CD4-positive, alpha-beta memory T cell (primary cell): ENCODE measurements at regions of chr3 and their contacts with region 1.

Region 1: GRCh38 chr3:51995346-51996163 is at the start of gene RPL29:
- DNase-seq: peak; percentile 91 to 94 (median 94)
- H3K4me3 ChIP-seq: peak within 1 kb of the TSS; percentile 94 to 95
- H3K4me3 Mint-ChIP-seq: peak within 1 kb of the TSS; percentile 99 to 100 (median 100)
- H3K27ac ChIP-seq: peak within 1 kb of the TSS; percentile 91
- H3K27ac Mint-ChIP-seq: peak within 1 kb of the TSS; percentile 99 to 100 (median 100)
- H3K4me1 ChIP-seq: peaks cover 30% of the 10 kb centered on the region
- H3K4me1 Mint-ChIP-seq: peaks cover 16 to 45% (median 29%) of the 10 kb centered on the region in 4 donors
- H3K27me3 ChIP-seq: no peaks in the 10 kb centered on the region
- H3K27me3 Mint-ChIP-seq: no peaks in the 10 kb centered on the region
- total RNA-seq, gene RPL29: 1,263 to 1,270 TPM

Region 2: GRCh38 chr3:51670823-51671733 is 324.5 kb before region 1 on chr3 and contains the start of gene TEX264:
- CTCF ChIA-PET with region 1: no interaction called
- POLR2A ChIA-PET with region 1: no interaction called
- intact Hi-C with region 1: no loop called
- DNase-seq: peak; percentile 95 to 97 (median 96)
- H3K4me3 ChIP-seq: peak within 1 kb of the TSS; percentile 88 to 89
- H3K4me3 Mint-ChIP-seq: peak within 1 kb of the TSS; percentile 88 to 95 (median 92)
- H3K27ac ChIP-seq: peak within 1 kb of the TSS; percentile 83
- H3K27ac Mint-ChIP-seq: peak within 1 kb of the TSS; percentile 95 to 97 (median 97)
- H3K4me1 ChIP-seq: peaks cover 66% of the 10 kb centered on the region
- H3K4me1 Mint-ChIP-seq: peaks cover 54 to 74% (median 63%) of the 10 kb centered on the region in 4 donors
- H3K27me3 ChIP-seq: no peaks in the 10 kb centered on the region
- H3K27me3 Mint-ChIP-seq: no peaks in the 10 kb centered on the region
- total RNA-seq, gene TEX264: 40.0 to 40.9 TPM

Region 3: GRCh38 chr3:51967384-51968169 is 28.0 kb before region 1 on chr3 and contains the start of gene PCBP4:
- CTCF ChIA-PET with region 1: interaction called, 22 read pairs
- POLR2A ChIA-PET with region 1: interaction called, 53 read pairs
- intact Hi-C with region 1: no loop called
- DNase-seq: peak in 3 of 5 donors; percentile 32 to 48 (median 43)
- H3K4me3 ChIP-seq: peak within 1 kb of the TSS; percentile 63 to 65
- H3K4me3 Mint-ChIP-seq: peak within 1 kb of the TSS; percentile 81 to 94 (median 83)
- H3K27ac ChIP-seq: peak within 1 kb of the TSS; percentile 57
- H3K27ac Mint-ChIP-seq: peak within 1 kb of the TSS; percentile 68 to 94 (median 85)
- H3K4me1 ChIP-seq: peaks cover 22% of the 10 kb centered on the region
- H3K4me1 Mint-ChIP-seq: peaks cover 15 to 40% (median 29%) of the 10 kb centered on the region in 4 donors
- H3K27me3 ChIP-seq: no peaks in the 10 kb centered on the region
- H3K27me3 Mint-ChIP-seq: no peaks in the 10 kb centered on the region
- total RNA-seq, gene PCBP4: 18.7 to 20.5 TPM

Region 4: DNA sequence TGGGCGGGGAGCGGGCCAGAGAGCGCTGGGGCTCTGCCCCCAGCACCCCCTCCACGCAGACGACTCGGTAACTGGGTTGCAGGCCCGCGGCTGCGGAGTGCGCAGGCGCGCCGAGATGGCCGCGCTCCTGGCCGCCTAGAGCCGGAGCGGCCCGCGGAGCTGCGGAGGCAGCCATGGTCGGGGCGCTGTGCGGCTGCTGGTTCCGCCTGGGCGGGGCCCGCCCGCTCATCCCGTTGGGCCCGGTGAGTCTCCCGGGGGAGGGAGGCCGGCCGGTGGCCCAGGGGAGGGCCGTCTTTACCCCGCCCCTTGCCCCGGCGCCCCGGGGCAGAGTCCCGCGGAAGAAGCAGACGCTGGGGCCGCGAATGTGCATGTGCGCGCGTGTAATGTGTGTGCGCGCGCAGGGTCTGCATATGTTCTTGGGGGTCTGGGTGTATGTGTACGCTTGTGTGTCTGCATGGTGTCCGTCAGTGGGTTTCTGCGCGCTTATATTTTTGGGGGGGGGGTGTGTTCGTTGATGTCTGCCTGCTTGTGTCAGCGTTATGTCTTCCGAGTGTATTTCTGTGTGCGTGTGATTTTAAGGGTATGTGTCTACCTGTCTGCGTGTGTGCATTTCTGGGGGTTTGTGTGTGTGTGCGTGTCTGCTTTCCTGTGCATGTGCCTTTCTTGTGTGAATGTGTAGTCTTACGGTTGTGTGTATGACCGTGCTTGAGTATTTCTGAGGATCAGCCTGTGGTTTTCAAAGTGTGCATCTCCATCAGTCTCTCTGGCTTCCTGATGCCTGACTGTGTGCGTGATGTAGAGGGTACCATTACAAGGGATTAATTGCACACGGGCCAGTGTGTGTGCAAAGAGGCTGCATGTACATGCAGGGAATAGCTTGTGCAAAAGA is 20.3 kb before region 1 on chr3 and contains the start of gene ABHD14A:
- CTCF ChIA-PET with region 1: interaction called, 22 read pairs
- POLR2A ChIA-PET with region 1: interaction called, 59 read pairs
- intact Hi-C with region 1: loop called (anchors 1 kb)
- DNase-seq: peak; percentile 75 to 80 (median 76)
- H3K4me3 ChIP-seq: peak within 1 kb of the TSS; percentile 81 to 95
- H3K4me3 Mint-ChIP-seq: peak within 1 kb of the TSS; percentile 90 to 99 (median 96)
- H3K27ac ChIP-seq: peak within 1 kb of the TSS; percentile 78
- H3K27ac Mint-ChIP-seq: peak within 1 kb of the TSS; percentile 68 to 98 (median 96)
- H3K4me1 ChIP-seq: peaks cover 32% of the 10 kb centered on the region
- H3K4me1 Mint-ChIP-seq: peaks cover 28 to 53% (median 41%) of the 10 kb centered on the region in 4 donors
- H3K27me3 ChIP-seq: no peaks in the 10 kb centered on the region
- H3K27me3 Mint-ChIP-seq: no peaks in the 10 kb centered on the region
- total RNA-seq, gene ABHD14A: 23.7 to 24.5 TPM

Region 5: DNA sequence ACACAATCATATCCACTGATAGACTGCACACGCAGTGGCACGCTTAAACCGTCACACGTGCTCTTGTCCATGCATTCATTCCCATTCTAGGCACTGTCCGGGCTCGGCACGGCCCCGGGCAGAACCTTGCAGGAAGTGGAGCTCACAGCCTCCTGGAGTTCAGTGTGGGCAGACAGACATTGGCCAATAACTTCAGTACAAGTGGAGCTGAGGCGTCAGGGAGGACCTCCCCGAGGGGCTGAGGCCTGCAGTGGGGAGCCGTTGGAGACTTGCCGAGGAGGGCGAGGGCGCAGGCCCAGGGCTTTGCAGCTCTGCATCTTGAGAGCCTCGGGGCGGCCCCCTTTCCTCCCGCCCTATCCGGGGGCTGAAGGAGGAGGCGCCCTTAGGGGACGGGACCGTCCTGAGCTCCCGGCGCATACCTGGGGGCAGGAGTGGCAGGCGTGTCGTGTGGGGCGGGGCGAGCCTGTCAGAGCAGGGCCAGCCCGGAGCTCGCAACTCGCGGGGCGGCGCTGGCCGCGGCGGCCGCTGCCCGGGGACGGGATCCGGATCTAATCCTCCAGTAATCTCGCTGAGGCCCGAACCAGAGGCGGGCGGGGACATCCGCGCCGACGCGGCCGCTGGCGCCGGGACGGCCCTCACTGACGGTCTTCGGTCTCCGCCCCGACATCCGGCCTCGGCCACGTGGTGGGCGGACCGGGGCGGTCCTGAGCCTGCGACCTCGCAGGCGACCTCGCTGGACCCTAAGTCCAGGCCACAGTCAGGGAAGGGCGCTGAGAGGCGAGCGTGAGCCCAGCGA is 12.6 kb before region 1 on chr3 and contains the start of gene ACY1:
- CTCF ChIA-PET with region 1: interaction called, 29 read pairs
- POLR2A ChIA-PET with region 1: interaction called, 59 read pairs
- intact Hi-C with region 1: no loop called
- DNase-seq: peak; percentile 54 to 83 (median 60)
- H3K4me3 ChIP-seq: peak within 1 kb of the TSS; percentile 36 to 55
- H3K4me3 Mint-ChIP-seq: peak within 1 kb of the TSS; percentile 90 to 97 (median 94)
- H3K27ac ChIP-seq: peak within 1 kb of the TSS; percentile 77
- H3K27ac Mint-ChIP-seq: peak within 1 kb of the TSS; percentile 84 to 98 (median 94)
- H3K4me1 ChIP-seq: peaks cover 26% of the 10 kb centered on the region
- H3K4me1 Mint-ChIP-seq: peaks cover 7 to 29% (median 24%) of the 10 kb centered on the region in 4 donors
- H3K27me3 ChIP-seq: no peaks in the 10 kb centered on the region
- H3K27me3 Mint-ChIP-seq: no peaks in the 10 kb centered on the region
- total RNA-seq, gene ACY1: 7.7 to 8.4 TPM

Region 6: GRCh38 chr3:52154117-52155094 is 158.9 kb after region 1 on chr3 and contains the start of gene POC1A:
- CTCF ChIA-PET with region 1: no interaction called
- POLR2A ChIA-PET with region 1: interaction called, 15 read pairs
- intact Hi-C with region 1: loop called (anchors 1 kb)
- DNase-seq: peak; percentile 83 to 90 (median 85)
- H3K4me3 ChIP-seq: peak within 1 kb of the TSS; percentile 93 to 95
- H3K4me3 Mint-ChIP-seq: peak within 1 kb of the TSS; percentile 93 to 98 (median 97)
- H3K27ac ChIP-seq: peak within 1 kb of the TSS; percentile 74
- H3K27ac Mint-ChIP-seq: peak within 1 kb of the TSS; percentile 95 to 98 (median 98)
- H3K4me1 ChIP-seq: peaks cover 13% of the 10 kb centered on the region
- H3K4me1 Mint-ChIP-seq: peaks cover 3 to 15% (median 8%) of the 10 kb centered on the region in 4 donors
- H3K27me3 ChIP-seq: no peaks in the 10 kb centered on the region
- H3K27me3 Mint-ChIP-seq: no peaks in the 10 kb centered on the region
- total RNA-seq, gene POC1A: 0.99 to 1.1 TPM